Posterior vena cava (tissue), 2 donors: ENCODE measurements at regions of chr7 and their contacts with region 1.

Region 1: GRCh38 chr7:125892434-125892833 is 962.8 kb upstream of the POT1 start:
- DNase-seq: no peak

Region 2: GRCh38 chr7:125675640-125676039 is 216.8 kb before region 1 on chr7:
- intact Hi-C with region 1: loop called in 1 of 2 experiments (anchors 5 kb)
- DNase-seq: no peak